B cell (primary cell): ENCODE measurements at regions of chr3 and their contacts with region 1.

Region 1: DNA sequence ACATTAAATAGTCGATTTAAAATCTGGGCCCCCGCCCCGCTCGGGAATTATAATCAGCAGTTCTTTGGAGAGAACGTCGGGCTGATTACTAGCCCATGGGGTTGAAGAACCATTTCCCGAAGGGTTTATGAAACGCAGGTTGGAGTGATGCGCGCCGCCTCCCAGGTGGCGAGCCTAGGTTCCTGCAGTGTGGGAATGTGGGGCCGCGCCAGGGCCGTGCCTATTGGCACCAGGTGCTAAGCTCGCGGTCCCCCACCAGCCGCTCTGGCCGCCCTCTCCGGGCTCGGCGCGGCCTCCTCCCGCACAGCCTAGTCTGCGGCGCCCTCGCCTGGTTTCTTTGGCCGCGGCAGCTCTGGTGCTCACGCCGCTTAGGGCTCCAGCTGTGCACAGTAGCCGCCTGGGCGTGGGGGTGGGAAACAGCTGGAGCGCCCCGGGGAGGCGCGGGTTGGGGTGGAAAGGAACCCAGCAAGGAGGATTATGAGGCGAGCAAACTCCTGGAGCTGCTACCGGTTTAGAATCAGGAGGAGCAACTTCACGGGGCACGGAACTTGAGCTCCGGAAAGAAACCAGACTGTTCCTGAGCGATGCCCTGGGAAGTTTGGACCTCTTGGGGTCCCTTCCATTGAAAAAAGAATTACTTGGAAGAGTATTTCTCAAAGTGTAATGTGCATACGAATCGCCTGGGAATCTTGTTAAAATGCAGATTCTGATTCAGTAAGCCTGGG is 5.6 kb upstream of the MECOM start:
- DNase-seq: peak; percentile 73
- ATAC-seq: peak; percentile 83
- H3K4me3 ChIP-seq: peak overlapping the region; percentile 2 to 47 (median 33)
- H3K4me3 Mint-ChIP-seq: peak overlapping the region; percentile 74
- H3K27ac ChIP-seq: no peak overlapping the region
- H3K27ac Mint-ChIP-seq: no peak overlapping the region
- H3K4me1 ChIP-seq: peaks cover 26 to 38% of the 10 kb centered on the region in 2 donors
- H3K4me1 Mint-ChIP-seq: peaks cover 30% of the 10 kb centered on the region
- H3K27me3 ChIP-seq: peaks cover 0 to 77% (median 75%) of the 10 kb centered on the region in 4 experiments
- H3K27me3 Mint-ChIP-seq: peaks cover 88% of the 10 kb centered on the region
- CTCF ChIP-seq: peak; percentile 54

Region 2: DNA sequence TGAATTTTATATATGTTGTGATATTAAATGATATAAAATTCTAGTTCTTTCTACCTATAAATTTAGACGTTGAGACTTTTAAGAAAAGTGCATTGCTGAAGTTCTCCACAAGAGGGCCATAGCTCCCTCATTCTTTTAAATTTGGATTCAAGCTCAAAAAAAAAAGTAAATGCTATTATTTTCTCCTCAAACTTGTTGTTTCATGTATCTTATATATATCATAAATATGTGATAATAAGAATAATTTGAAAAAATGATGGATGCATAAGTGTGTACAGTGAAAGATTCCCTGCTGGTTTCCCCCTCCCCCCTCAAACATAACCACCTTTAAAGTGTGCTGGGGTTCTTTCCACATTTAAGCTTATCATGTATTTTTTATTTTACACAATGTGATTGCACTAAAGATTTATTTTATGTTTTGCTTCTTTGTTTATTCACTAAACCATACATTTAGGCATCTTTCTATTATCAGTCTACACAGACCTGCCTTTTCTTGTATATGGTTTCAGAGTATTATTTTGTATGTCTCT is 804.0 kb before region 1 on chr3:
- CTCF ChIA-PET with region 1: interaction called, 18 read pairs
- POLR2A ChIA-PET with region 1: no interaction called
- intact Hi-C with region 1: no loop called
- DNase-seq: peak; percentile 11
- ATAC-seq: no peak
- H3K4me3 ChIP-seq: no peak overlapping the region
- H3K4me3 Mint-ChIP-seq: no peak overlapping the region
- H3K27ac ChIP-seq: no peak overlapping the region
- H3K27ac Mint-ChIP-seq: no peak overlapping the region
- H3K4me1 ChIP-seq: no peaks in the 10 kb centered on the region
- H3K4me1 Mint-ChIP-seq: no peaks in the 10 kb centered on the region
- H3K27me3 ChIP-seq: no peaks in the 10 kb centered on the region
- H3K27me3 Mint-ChIP-seq: peaks cover 4% of the 10 kb centered on the region
- CTCF ChIP-seq: peak; percentile 82

Region 3: GRCh38 chr3:169149349-169149890 is 519.7 kb before region 1 on chr3:
- CTCF ChIA-PET with region 1: interaction called, 56 read pairs
- POLR2A ChIA-PET with region 1: no interaction called
- intact Hi-C with region 1: loop called (anchors 1 kb)
- DNase-seq: peak; percentile 80
- ATAC-seq: peak; percentile 93
- H3K4me3 ChIP-seq: peak overlapping the region in 1 of 5 experiments; percentile 21
- H3K4me3 Mint-ChIP-seq: peak overlapping the region; percentile 59
- H3K27ac ChIP-seq: no peak overlapping the region
- H3K27ac Mint-ChIP-seq: no peak overlapping the region
- H3K4me1 ChIP-seq: peaks cover 28 to 30% of the 10 kb centered on the region in 2 donors
- H3K4me1 Mint-ChIP-seq: peaks cover 27% of the 10 kb centered on the region
- H3K27me3 ChIP-seq: peaks cover 0 to 54% (median 45%) of the 10 kb centered on the region in 4 experiments
- H3K27me3 Mint-ChIP-seq: peaks cover 54% of the 10 kb centered on the region
- CTCF ChIP-seq: peak; percentile 79

Region 4: GRCh38 chr3:169836078-169836941 is 167.2 kb after region 1 on chr3:
- CTCF ChIA-PET with region 1: no interaction called
- POLR2A ChIA-PET with region 1: no interaction called
- intact Hi-C with region 1: loop called (anchors 10 kb)
- DNase-seq: peak; percentile 77
- ATAC-seq: peak; percentile 97
- H3K4me3 ChIP-seq: no peak overlapping the region
- H3K4me3 Mint-ChIP-seq: peak overlapping the region; percentile 21
- H3K27ac ChIP-seq: peak overlapping the region; percentile 75 to 91
- H3K27ac Mint-ChIP-seq: peak overlapping the region; percentile 97
- H3K4me1 ChIP-seq: peaks cover 31 to 35% of the 10 kb centered on the region in 2 donors
- H3K4me1 Mint-ChIP-seq: peaks cover 44% of the 10 kb centered on the region
- H3K27me3 ChIP-seq: no peaks in the 10 kb centered on the region
- H3K27me3 Mint-ChIP-seq: no peaks in the 10 kb centered on the region
- CTCF ChIP-seq: no peak

Region 5: GRCh38 chr3:169945313-169945712 is 276.2 kb after region 1 on chr3:
- CTCF ChIA-PET with region 1: no interaction called
- POLR2A ChIA-PET with region 1: no interaction called
- intact Hi-C with region 1: loop called (anchors 10 kb)
- DNase-seq: peak; percentile 93
- ATAC-seq: peak; percentile 91
- H3K4me3 ChIP-seq: peak overlapping the region in 3 of 5 experiments; percentile 13 to 38 (median 15)
- H3K4me3 Mint-ChIP-seq: peak overlapping the region; percentile 79
- H3K27ac ChIP-seq: peak overlapping the region; percentile 79 to 81
- H3K27ac Mint-ChIP-seq: peak overlapping the region; percentile 91
- H3K4me1 ChIP-seq: peaks cover 82 to 88% of the 10 kb centered on the region in 2 donors
- H3K4me1 Mint-ChIP-seq: peaks cover 87% of the 10 kb centered on the region
- H3K27me3 ChIP-seq: no peaks in the 10 kb centered on the region
- H3K27me3 Mint-ChIP-seq: no peaks in the 10 kb centered on the region
- CTCF ChIP-seq: peak; percentile 11